ENCODE measurements at regions of chr19 and their contacts with region 1.

Region 1: DNA sequence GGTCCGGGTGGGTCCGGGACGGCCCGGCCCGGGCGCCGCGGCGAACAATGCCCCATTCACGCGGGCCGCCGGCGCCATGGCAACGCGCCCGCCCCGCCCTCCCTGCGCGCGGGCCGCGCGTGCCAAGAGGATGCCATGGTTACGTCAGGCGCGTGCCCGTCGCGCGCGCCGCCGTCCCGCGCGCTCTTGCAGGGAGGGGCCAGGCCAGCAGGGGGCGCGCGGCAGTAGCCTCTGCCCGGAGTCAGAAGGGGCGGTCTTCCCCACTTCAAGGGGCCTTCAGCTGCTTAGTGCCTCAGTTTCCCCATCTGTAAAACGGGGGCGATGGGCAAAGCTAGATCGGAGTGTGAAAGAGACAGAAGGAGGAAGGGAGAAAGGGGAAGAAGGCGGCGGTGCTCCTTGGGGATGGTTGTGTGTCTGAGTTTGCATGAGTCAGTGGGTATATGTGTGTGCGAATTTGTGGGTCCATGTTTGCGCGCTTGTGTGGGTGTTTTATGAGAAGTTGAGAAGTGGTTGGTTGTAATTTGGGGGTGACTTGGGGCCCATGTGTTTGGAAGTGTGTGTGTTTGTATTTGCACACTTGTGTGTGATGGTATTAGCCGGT is 11.6 kb upstream of the NFIX start:
- DNase-seq: peak; percentile 74 to 90 (median 80)
- H3K4me3 ChIP-seq: peak overlapping the region in 54 of 59 donors; percentile 13 to 62 (median 44)
- H3K27ac ChIP-seq: peak overlapping the region in 56 of 59 donors; percentile 28 to 99 (median 94)
- H3K27me3 ChIP-seq: no peaks in the 10 kb centered on the region
- CTCF ChIP-seq: peak; percentile 75 to 99 (median 95)

Region 2: DNA sequence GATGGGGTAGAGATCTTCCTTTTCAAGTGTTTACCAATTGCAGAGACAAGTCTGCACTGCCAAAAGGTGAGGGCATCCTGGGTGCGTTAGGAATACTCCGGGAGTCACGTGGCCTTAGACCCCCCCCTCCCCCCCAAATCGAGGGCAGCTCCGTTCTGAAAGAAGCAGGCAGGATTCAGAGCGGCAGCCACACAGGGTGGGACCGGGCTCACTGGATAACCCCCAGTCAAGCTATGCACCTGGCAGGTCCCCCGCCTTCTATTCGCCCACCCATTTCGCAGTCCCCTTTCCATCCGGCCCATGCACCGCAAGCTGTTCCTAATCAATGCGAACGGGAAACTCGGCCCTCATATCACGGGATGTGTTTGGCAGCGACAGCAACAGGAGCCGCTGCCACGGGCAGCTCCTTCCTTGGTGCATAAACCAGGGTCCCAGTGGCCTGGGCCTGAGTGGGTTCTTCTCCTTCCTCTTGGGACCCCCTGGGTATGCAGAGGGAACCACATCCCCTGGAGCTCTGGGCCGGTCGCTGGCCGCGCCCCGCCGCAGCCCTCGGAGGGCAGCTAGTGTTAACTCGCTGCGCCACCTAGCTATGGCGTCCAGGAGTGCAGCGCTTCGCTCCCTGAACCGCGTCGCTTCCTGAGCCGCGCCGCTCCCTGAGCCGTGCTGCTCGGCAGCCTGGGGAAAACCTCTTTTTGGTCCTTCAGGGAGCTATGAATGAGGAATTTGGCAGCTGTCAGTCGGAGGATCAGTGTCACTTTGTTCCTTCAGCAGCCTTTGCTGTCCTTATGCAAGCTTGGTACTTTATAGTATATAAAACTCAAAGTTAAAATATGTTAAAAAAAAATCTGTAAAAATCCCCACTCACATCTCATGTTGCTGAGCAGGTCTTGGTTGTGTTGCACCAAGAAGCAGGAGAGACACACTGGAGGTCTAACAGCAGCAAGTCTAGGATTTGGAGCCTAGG is 77.6 kb after region 1 on chr19:
- intact Hi-C with region 1: loop called in 1 of 2 experiments (anchors 2 kb)
- DNase-seq: peak; percentile 80 to 92 (median 88)
- H3K4me3 ChIP-seq: peak overlapping the region; percentile 24 to 69 (median 55)
- H3K27ac ChIP-seq: peak overlapping the region; percentile 67 to 100 (median 98)
- H3K27me3 ChIP-seq: no peaks in the 10 kb centered on the region
- CTCF ChIP-seq: peak; percentile 91 to 99 (median 97)

Region 3: DNA sequence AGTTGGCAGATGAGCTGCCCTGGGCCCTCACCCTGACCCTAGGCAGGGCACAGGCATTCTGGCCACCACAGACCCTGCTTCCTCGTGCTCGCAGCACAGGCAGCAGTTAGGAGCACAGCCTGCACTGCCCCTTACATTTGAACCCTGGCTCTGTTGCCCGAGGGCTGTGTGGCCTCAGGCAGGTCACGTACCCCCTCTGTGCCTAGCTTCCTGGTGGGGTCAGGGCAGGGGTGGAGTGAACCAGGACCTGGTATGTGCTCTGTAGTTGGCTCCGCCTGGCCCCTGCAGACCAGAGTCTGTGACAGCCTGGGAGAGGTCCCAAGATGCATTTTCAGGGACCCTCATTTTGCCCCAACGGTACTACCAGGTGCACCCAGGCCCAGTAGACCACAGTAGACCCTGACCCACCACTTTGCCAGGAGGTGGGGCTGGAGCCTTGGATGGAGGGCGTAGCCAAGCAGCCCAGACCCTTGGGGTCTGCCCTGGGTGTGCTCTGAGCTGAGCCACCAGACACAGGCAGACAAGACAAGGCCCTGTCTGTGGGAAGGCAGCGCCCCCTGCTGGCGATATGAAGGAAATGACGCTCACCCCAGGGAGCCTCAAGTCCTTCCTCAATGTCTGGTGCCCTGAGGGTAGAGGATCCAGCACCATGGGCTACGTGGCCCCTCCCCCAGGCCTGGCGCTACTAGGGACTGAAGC is 109.9 kb after region 1 on chr19:
- intact Hi-C with region 1: loop called (anchors 2 kb)
- DNase-seq: peak; percentile 82 to 92 (median 88)
- H3K4me3 ChIP-seq: no peak overlapping the region
- H3K27ac ChIP-seq: peak overlapping the region; percentile 35 to 100 (median 90)
- H3K27me3 ChIP-seq: no peaks in the 10 kb centered on the region
- CTCF ChIP-seq: peak; percentile 95 to 99 (median 98)

Measured in dorsolateral prefrontal cortex (tissue), 120 donors.